GM10248 (cell line): ENCODE measurements at regions of chr9 and their contacts with region 1.

Region 1: GRCh38 chr9:128607642-128608350 is 48.9 kb downstream of the DYNC2I2 start:
- DNase-seq: no peak
- CTCF ChIP-seq: no peak

Region 2: GRCh38 chr9:128577206-128577605 is 30.6 kb before region 1 on chr9:
- CTCF ChIA-PET with region 1: interaction called, 10 read pairs
- POLR2A ChIA-PET with region 1: no interaction called
- DNase-seq: no peak
- CTCF ChIP-seq: no peak

Region 3: DNA sequence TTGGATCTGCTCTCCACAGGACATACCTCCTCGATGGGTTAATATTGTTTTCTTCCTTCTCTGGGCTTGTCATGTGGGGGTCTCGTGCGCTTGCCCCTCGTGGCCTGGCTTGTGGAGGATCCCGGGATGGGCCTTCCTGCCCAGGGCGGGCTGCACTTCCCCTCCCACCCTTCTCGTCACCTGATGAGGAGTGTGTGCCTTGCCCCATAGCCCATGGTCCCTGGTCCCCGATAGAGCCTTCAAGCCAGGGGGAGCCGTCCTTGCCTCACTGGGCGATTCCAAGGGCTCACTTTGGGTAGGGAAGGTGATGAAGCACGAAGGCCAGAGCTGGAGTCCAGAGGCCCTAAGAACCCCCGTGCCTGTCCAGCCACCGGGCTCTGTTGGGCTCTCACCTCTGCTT is 20.1 kb after region 1 on chr9:
- CTCF ChIA-PET with region 1: no interaction called
- POLR2A ChIA-PET with region 1: no interaction called
- DNase-seq: no peak
- CTCF ChIP-seq: no peak